ENCODE measurements at regions of chr7 and their contacts with region 1.

Region 1: DNA sequence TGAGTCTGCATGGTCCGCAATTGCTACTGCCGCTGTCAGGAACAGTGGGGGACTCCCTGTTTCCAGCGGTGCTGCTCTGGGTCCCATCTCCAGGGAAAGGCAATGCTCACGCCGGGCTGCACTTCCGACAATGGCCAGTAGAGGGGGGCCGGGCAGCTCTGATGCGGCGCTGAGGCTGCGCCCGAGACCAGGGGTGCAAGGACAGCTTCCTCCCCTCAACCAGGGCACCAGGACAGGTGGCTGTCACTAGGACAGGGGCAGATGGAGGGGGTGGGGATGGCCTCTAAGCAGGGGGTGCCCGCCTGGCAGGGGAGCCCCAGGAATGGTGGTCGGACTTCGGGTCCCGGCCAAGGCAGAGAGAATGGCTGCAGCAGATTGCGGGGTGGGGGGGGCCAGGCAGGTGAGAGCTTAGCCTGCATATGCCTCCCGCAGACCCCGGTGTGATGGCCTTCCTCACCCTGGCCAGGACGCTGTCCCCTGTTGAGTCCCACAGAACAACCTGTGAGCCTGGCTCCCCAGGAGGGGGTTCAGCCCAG is 71.0 kb upstream of the KCTD7 start:
- DNase-seq: peak; percentile 52 to 84 (median 73)
- ATAC-seq: peak; percentile 97
- H3K4me3 ChIP-seq: no peak overlapping the region
- H3K4me3 Mint-ChIP-seq: no peak overlapping the region
- H3K27ac ChIP-seq: no peak overlapping the region
- H3K27ac Mint-ChIP-seq: no peak overlapping the region
- H3K4me1 ChIP-seq: peaks cover 5% of the 10 kb centered on the region
- H3K4me1 Mint-ChIP-seq: peaks cover 7% of the 10 kb centered on the region
- H3K27me3 ChIP-seq: no peaks in the 10 kb centered on the region
- H3K27me3 Mint-ChIP-seq: no peaks in the 10 kb centered on the region
- CTCF ChIP-seq: peak; percentile 92

Region 2: DNA sequence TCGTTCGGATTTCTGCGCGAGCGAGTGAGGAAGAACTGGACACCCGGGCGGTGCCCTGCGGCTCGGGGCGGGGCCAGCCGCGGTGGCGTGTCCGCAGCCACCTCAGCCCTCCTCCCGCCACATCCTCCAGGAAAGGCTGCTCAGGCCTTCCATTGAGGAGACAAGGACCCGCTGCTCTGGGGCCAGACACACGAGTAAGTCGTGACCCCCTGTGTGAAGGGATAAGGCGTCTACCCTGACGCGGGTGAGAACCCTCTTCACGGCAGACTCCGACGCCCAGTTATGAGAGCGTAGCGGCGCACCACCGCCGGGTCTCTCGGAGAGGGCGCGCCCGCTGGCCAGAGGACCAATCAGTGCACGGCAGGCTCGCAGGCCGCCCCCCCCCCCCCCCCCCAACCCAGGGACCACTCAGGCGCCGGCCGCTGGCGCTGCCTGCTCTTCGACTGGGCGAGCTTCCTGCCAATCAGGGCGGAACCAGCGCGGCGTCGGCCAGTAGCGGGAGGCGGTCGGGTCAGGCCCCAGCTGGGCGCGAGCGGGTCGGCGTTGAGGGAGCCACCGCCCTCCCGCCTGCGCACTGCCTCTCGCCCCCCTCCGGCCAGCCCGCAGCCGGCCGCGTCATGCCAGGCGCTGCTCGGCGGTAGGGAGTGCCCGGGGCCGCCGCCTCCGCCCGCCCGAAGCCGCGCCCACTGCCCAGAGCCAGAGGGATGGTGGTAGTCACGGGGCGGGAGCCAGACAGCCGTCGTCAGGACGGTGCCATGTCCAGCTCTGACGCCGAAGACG is 70.9 kb after region 1 on chr7 and contains the start of gene KCTD7:
- CTCF ChIA-PET with region 1: interaction called, 4 read pairs
- POLR2A ChIA-PET with region 1: interaction called, 3 read pairs
- intact Hi-C with region 1: loop called (anchors 2 to 5 kb)
- DNase-seq: peak; percentile 91 to 98 (median 94)
- ATAC-seq: peak; percentile 89
- H3K4me3 ChIP-seq: peak within 1 kb of the TSS; percentile 91 to 99
- H3K4me3 Mint-ChIP-seq: peak within 1 kb of the TSS; percentile 89
- H3K27ac ChIP-seq: peak within 1 kb of the TSS; percentile 89 to 97
- H3K27ac Mint-ChIP-seq: peak within 1 kb of the TSS; percentile 91
- H3K4me1 ChIP-seq: peaks cover 42% of the 10 kb centered on the region
- H3K4me1 Mint-ChIP-seq: peaks cover 51% of the 10 kb centered on the region
- H3K27me3 ChIP-seq: no peaks in the 10 kb centered on the region
- H3K27me3 Mint-ChIP-seq: no peaks in the 10 kb centered on the region
- CTCF ChIP-seq: no peak
- total RNA-seq, gene KCTD7: 12.9 to 13.2 TPM

Region 3: DNA sequence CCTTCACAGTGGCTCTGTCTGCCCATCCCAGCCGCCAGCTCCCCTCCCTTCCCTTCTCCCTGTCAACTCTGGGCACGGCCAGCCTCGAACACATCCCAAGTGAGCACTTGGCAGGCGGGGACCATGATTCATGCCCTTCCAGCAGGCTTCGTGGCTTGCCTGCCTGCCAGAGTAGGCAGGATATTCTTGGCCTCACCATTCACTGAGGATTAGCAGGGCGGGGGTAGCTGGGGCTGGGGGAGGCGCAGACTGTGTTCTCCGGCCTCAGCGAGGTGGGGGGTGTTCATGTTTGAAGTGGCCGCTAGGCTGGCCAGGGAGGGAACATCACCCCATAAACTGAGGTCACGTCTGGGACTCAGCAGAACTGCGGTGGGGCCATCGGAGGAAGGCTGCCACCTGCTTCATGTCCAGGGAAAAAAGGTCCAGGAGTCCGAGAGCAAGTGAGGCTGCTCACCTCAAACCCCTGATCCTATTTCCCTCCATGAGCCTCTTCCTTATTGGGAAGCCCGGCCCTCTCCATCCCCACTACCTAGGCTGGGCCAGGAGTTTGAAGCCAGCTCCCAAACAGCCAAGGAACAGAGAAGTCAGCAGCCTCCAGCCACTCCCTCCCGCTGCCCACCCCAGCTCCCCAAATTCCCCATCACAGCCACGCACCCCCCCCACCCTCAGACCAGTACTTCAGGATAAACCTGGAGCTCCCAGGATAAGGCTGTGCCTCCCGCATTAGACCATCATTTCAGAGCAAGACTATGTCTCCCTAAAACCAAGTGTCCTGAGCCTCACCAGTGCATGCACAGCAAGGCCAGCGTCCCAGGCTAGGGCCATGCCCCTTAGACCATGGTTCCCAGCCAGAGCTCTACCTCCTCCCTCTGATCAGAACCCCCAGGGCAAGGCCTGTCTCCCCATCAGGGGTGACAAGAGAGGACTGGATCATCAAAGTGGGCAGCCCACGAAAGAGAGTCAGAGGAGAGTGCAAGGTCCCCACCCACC is 140.1 kb after region 1 on chr7:
- CTCF ChIA-PET with region 1: no interaction called
- POLR2A ChIA-PET with region 1: no interaction called
- intact Hi-C with region 1: loop called in 1 of 2 experiments (anchors 5 kb)
- DNase-seq: no peak
- ATAC-seq: peak; percentile 12
- H3K4me3 ChIP-seq: no peak overlapping the region
- H3K4me3 Mint-ChIP-seq: no peak overlapping the region
- H3K27ac ChIP-seq: no peak overlapping the region
- H3K27ac Mint-ChIP-seq: no peak overlapping the region
- H3K4me1 ChIP-seq: no peaks in the 10 kb centered on the region
- H3K4me1 Mint-ChIP-seq: no peaks in the 10 kb centered on the region
- H3K27me3 ChIP-seq: no peaks in the 10 kb centered on the region
- H3K27me3 Mint-ChIP-seq: no peaks in the 10 kb centered on the region
- CTCF ChIP-seq: no peak

Region 4: GRCh38 chr7:66731986-66732385 is 174.3 kb after region 1 on chr7:
- CTCF ChIA-PET with region 1: no interaction called
- POLR2A ChIA-PET with region 1: no interaction called
- intact Hi-C with region 1: no loop called
- DNase-seq: no peak
- ATAC-seq: no peak
- H3K4me3 ChIP-seq: no peak overlapping the region
- H3K4me3 Mint-ChIP-seq: no peak overlapping the region
- H3K27ac ChIP-seq: no peak overlapping the region
- H3K27ac Mint-ChIP-seq: no peak overlapping the region
- H3K4me1 ChIP-seq: peaks cover under 1% of the 10 kb centered on the region
- H3K4me1 Mint-ChIP-seq: peaks cover 13% of the 10 kb centered on the region
- H3K27me3 ChIP-seq: no peaks in the 10 kb centered on the region
- H3K27me3 Mint-ChIP-seq: no peaks in the 10 kb centered on the region
- CTCF ChIP-seq: no peak

Region 5: DNA sequence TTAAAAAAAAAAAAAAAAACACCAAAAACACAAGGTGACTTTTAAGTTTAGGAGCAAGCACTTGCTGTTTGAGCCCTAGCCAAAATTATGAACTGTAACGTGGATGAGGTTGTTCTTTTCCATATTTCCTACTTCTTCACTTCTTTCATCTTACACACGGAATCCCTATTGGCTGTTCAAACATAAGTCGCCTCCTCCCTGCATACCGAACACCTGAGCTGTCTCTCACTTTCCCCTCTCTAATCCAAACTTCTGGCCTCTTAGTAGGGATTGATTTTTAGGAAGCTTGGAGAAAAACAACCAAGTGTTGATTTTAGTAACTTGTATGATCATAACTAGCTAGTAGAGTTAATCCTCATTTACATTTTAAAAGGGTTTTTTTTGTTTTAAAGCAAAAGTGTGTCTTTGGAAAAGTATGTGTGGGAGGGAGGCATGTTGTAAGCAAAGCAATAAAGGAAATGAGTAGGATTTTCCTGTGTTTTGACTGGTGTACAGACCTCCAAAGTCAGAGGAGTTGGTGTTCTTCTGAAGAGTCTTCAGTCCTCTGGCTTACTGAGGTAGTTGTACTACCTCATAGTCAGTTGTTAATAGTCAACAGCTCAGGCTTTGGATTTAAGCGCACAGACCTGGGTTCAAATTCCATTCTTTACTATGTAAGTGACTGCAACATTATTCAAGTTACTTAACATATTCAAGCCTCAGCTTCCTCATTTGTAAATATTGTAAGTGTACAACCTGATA is 222.2 kb after region 1 on chr7:
- CTCF ChIA-PET with region 1: interaction called, 4 read pairs
- POLR2A ChIA-PET with region 1: no interaction called
- intact Hi-C with region 1: loop called (anchors 5 to 10 kb)
- DNase-seq: no peak
- ATAC-seq: no peak
- H3K4me3 ChIP-seq: no peak overlapping the region
- H3K4me3 Mint-ChIP-seq: no peak overlapping the region
- H3K27ac ChIP-seq: no peak overlapping the region
- H3K27ac Mint-ChIP-seq: peak overlapping the region; percentile 12
- H3K4me1 ChIP-seq: no peaks in the 10 kb centered on the region
- H3K4me1 Mint-ChIP-seq: peaks cover 14% of the 10 kb centered on the region
- H3K27me3 ChIP-seq: no peaks in the 10 kb centered on the region
- H3K27me3 Mint-ChIP-seq: no peaks in the 10 kb centered on the region
- CTCF ChIP-seq: no peak

Region 6: DNA sequence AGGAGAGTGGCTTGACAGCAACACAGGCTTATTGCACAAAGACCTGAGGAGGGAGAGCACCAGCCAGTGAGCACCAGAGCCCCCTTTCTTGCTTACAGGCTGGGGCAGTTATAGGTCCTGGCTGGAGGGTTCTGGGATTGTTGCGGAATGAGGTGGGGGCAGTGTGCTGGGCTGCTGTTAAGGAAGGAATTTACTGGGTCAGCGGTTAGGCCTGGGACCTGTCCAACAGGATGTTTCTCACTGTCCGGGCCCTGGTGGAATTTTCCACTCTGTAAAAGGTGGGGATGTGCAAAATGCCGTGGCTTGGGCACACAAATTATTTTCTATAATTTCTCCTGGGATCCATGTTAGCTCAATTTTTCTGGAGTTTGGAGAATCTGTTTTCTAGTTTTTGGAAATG is 1196.2 kb after region 1 on chr7:
- CTCF ChIA-PET with region 1: no interaction called
- POLR2A ChIA-PET with region 1: no interaction called
- intact Hi-C with region 1: no loop called
- DNase-seq: no peak
- ATAC-seq: no peak
- H3K4me3 ChIP-seq: no peak overlapping the region
- H3K4me3 Mint-ChIP-seq: no peak overlapping the region
- H3K27ac ChIP-seq: no peak overlapping the region
- H3K27ac Mint-ChIP-seq: no peak overlapping the region
- H3K4me1 ChIP-seq: no peaks in the 10 kb centered on the region
- H3K4me1 Mint-ChIP-seq: no peaks in the 10 kb centered on the region
- H3K27me3 ChIP-seq: no peaks in the 10 kb centered on the region
- H3K27me3 Mint-ChIP-seq: no peaks in the 10 kb centered on the region
- CTCF ChIP-seq: no peak